ENCODE measurements at regions of chr1 and their contacts with region 1.

Region 1: GRCh38 chr1:41416552-41417334 is 55.5 kb downstream of the FOXO6 start:
- DNase-seq: peak; percentile 52
- ATAC-seq: peak; percentile 74
- H3K4me3 Mint-ChIP-seq: no peak overlapping the region
- H3K27ac Mint-ChIP-seq: no peak overlapping the region
- H3K4me1 Mint-ChIP-seq: no peaks in the 10 kb centered on the region
- H3K27me3 Mint-ChIP-seq: peaks cover 14% of the 10 kb centered on the region
- CTCF ChIP-seq: no peak

Region 2: DNA sequence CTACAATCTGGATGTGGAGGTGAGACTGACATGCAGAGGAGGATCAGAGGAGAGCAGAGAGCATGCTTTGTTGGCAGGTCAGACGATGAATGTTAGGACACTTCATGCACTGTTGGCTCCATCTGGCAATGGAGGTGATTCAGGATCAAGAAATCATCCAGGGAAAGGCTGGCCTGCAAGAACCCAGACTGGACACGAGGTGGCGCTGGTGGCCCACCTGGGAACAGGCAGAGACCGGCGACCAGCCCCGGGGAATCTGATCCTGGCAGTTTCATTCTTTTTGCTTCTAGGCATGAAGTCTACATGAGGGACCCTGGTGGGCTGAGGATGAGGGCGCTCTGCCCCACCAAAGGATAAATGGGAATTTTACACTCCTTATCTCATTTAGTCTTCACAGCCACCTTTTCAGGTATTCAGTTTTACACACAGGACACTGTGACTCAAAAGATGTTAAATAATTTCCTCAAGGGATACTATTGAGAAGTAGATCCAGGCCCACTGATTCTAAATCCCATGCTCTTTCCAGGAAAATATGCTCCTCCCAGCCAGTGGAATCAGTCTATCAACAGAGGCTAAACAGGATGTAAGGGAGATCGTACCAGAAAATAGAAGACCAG is 148.5 kb before region 1 on chr1:
- CTCF ChIA-PET with region 1: interaction called, 14 read pairs
- POLR2A ChIA-PET with region 1: no interaction called
- intact Hi-C with region 1: loop called (anchors 1 kb)
- DNase-seq: peak; percentile 55
- ATAC-seq: peak; percentile 72
- H3K4me3 Mint-ChIP-seq: no peak overlapping the region
- H3K27ac Mint-ChIP-seq: no peak overlapping the region
- H3K4me1 Mint-ChIP-seq: peaks cover 4% of the 10 kb centered on the region
- H3K27me3 Mint-ChIP-seq: peaks cover 2% of the 10 kb centered on the region
- CTCF ChIP-seq: peak; percentile 97

Region 3: DNA sequence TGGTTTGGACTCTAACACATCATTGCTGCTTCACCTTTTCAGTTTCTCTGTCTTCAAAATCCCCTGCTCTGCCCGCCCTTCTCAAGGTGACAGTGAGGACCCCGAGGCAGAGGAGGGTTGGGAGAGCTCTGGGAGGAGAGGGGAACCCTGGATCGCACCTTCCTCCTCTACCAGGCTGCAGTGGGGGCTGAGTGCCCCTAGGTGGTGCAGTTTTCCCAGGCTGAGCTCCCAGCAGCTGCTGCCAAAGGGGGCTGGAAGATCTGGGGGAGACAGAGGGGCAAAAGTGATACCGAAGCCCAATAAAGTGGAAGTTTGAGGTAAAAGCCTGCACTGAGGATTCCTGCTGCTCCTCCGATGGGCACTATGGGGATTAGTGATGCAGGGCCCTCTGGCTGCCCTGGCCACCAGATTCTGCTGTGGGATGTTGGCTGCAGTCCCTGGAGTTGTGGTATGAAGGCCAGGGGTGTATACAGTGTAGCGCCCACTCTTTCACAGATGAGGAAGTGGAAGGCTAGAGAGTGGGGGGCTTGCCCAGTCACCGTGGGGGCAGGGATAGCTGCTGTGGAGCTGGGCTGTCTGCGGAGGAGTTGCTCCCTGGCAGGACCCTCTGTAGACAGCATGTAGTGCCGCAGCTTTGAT is 133.9 kb before region 1 on chr1:
- CTCF ChIA-PET with region 1: interaction called, 48 read pairs
- POLR2A ChIA-PET with region 1: no interaction called
- intact Hi-C with region 1: loop called (anchors 1 kb)
- DNase-seq: peak; percentile 22
- ATAC-seq: peak; percentile 54
- H3K4me3 Mint-ChIP-seq: no peak overlapping the region
- H3K27ac Mint-ChIP-seq: no peak overlapping the region
- H3K4me1 Mint-ChIP-seq: no peaks in the 10 kb centered on the region
- H3K27me3 Mint-ChIP-seq: peaks cover 22% of the 10 kb centered on the region
- CTCF ChIP-seq: no peak

Region 4: DNA sequence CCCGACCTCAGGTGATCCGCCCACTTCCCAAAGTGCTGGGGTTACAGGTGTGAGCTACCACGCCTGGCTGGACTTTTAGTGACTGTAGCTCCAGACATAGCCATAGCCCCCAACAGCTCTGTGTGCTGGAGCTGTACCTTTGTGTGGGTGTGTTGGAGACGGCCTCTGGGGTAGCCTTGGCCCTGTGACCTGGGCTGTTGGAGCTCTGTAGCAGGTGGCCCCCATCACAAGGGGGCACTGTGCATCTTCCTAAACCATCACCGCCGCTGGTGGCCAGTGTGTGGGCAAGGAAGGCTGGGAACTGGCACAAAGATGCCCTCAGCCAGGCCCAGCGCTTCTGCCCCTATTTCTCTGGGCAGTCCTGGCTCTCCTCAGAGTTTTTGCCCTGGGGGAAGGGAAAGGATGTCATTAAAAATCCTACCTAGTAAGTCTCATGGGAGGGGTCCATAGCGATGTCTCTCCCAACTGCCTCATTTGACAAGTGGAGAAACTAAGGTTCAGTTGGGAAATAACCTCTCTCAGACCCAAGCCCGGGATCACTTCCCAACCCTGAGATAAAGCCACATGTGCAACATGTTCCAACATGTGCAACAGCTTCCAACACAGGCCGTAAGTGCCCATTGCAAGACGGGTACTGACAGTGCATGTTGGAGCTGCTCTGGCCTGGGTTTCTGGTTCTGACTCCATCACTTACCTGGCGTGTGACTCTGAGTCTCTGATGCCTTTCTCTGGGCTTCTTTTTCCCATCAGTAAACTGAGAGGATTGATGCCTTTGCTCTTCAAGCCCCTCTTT is 93.7 kb before region 1 on chr1:
- CTCF ChIA-PET with region 1: interaction called, 23 read pairs
- POLR2A ChIA-PET with region 1: no interaction called
- intact Hi-C with region 1: loop called (anchors 1 kb)
- DNase-seq: no peak
- ATAC-seq: no peak
- H3K4me3 Mint-ChIP-seq: no peak overlapping the region
- H3K27ac Mint-ChIP-seq: no peak overlapping the region
- H3K4me1 Mint-ChIP-seq: no peaks in the 10 kb centered on the region
- H3K27me3 Mint-ChIP-seq: peaks cover 8% of the 10 kb centered on the region
- CTCF ChIP-seq: no peak

Region 5: DNA sequence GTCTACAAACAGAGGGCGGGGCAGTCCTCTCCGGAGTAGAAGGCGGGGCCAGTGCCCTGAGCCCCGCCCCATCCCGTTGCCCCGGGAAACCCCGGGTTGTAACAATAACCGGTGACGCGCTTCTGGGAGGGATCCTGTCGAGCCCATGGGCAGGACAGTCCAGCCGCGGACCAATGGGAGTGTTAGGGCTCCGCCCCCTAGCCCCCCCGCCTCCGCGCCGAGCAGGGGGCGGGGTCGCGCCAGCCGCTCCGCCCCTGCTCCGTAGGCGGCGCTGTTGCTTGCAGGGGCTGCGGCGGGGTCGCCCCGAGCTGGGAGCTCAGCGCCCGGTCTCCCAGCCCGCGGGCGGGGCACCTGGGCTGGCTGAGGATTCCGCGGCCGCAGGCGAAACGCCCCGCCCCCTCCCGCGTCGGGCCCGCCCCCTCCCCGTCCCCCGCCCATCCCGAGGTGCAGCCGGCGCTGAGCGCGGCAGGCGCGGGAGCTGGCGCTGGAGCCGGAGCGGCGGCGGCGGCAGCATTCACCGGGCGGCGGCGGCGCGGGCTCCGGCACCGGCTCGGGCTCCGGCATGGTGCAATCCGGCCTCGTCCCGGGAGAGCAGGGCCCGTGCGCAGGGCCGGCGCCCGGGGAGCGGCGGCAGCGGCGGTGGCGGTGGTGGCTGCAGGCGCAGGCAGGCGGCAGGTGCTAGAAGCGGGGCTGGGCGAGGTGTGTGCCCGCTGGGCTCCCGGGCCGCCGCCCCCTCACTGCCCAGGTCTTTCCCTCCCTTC is 55.6 kb before region 1 on chr1 and contains the start of gene FOXO6:
- CTCF ChIA-PET with region 1: interaction called, 3 read pairs
- POLR2A ChIA-PET with region 1: no interaction called
- intact Hi-C with region 1: loop called (anchors 2 kb)
- DNase-seq: peak; percentile 90
- ATAC-seq: peak; percentile 89
- H3K4me3 Mint-ChIP-seq: peak within 1 kb of the TSS; percentile 76
- H3K27ac Mint-ChIP-seq: peak within 1 kb of the TSS; percentile 28
- H3K4me1 Mint-ChIP-seq: peaks cover 26% of the 10 kb centered on the region
- H3K27me3 Mint-ChIP-seq: peaks cover 32% of the 10 kb centered on the region
- CTCF ChIP-seq: no peak
- total RNA-seq, gene FOXO6: 0.12 and 0.55 TPM in 2 replicates